Activated naive CD4-positive, alpha-beta T cell treated with anti-CD3 and anti-CD28 coated beads for 36 hours (primary cell): ENCODE measurements at regions of chr1 and their contacts with region 1.

Region 1: GRCh38 chr1:156480411-156481192 is 20.0 kb downstream of the MEF2D start:
- DNase-seq: peak; percentile 87
- H3K4me3 Mint-ChIP-seq: peak overlapping the region; percentile 5
- H3K27ac Mint-ChIP-seq: peak overlapping the region; percentile 81
- H3K4me1 Mint-ChIP-seq: peaks cover 54% of the 10 kb centered on the region
- H3K27me3 Mint-ChIP-seq: no peaks in the 10 kb centered on the region

Region 2: GRCh38 chr1:156510709-156511108 is 30.1 kb after region 1 on chr1:
- CTCF ChIA-PET with region 1: interaction called, 306 read pairs
- intact Hi-C with region 1: loop called (anchors 5 kb)
- DNase-seq: no peak
- H3K4me3 Mint-ChIP-seq: no peak overlapping the region
- H3K27ac Mint-ChIP-seq: no peak overlapping the region
- H3K4me1 Mint-ChIP-seq: peaks cover 36% of the 10 kb centered on the region
- H3K27me3 Mint-ChIP-seq: no peaks in the 10 kb centered on the region

Region 3: DNA sequence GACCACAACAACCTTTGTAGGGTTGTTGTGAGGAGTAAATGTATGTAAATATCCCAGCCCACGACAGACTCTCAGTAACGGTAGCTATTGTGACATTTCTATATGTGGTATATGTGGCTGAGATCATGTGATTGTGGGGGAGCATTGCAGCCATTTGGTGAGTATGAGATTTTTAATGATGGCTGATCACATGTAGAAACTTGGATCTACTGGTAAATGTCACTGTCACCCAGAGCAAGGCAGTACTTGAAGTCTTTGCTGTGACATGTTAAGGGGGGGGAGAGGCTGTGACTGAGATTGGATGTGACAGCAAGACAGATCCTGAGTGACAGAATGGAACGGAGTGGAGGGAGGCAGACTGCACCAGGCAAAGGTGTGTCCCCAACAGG is 43.9 kb after region 1 on chr1:
- CTCF ChIA-PET with region 1: interaction called, 11 read pairs
- intact Hi-C with region 1: loop called (anchors 1 kb)
- DNase-seq: peak; percentile 45
- H3K4me3 Mint-ChIP-seq: no peak overlapping the region
- H3K27ac Mint-ChIP-seq: no peak overlapping the region
- H3K4me1 Mint-ChIP-seq: peaks cover 34% of the 10 kb centered on the region
- H3K27me3 Mint-ChIP-seq: no peaks in the 10 kb centered on the region

Region 4: DNA sequence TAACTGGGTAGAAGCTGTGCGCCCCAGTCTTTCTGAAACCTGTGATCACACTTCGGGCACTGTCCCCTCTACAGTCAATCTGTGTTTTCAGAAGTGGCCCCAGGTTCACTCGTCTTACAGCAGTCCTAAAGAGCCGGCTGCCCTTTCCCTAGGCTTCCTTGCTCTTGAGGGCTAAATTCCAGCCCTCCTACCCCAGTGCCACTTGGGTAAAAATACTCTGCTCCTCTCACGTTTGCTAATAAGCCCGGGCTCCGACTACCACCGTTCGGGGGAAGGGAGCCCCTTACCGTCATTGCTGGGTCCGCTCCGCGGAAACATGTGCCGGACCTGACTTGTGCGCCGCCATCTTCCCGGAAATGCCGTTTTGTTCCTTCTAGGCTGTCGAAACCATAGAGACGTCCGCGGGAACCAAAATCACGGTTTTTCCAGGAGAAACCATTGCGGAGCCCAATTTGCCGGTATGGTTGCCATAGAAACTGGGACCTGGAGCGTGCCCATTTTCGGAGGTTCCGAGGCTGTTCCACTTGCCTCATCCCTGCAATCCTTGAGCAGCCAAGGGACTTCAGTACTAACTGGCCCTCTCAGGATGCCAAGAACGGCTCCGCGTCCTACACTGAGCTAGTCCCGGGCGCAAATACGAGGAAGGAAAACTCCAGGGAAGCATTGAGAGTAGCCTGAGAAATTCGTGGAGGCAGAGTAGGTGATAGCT is 120.7 kb after region 1 on chr1 and contains the start of gene GPATCH4:
- CTCF ChIA-PET with region 1: interaction called, 5 read pairs
- intact Hi-C with region 1: loop called (anchors 1 kb)
- DNase-seq: peak; percentile 89
- H3K4me3 Mint-ChIP-seq: peak within 1 kb of the TSS; percentile 91
- H3K27ac Mint-ChIP-seq: peak within 1 kb of the TSS; percentile 97
- H3K4me1 Mint-ChIP-seq: peaks cover 47% of the 10 kb centered on the region
- H3K27me3 Mint-ChIP-seq: no peaks in the 10 kb centered on the region
- total RNA-seq, gene GPATCH4: 37.5 to 38.3 TPM

Region 5: DNA sequence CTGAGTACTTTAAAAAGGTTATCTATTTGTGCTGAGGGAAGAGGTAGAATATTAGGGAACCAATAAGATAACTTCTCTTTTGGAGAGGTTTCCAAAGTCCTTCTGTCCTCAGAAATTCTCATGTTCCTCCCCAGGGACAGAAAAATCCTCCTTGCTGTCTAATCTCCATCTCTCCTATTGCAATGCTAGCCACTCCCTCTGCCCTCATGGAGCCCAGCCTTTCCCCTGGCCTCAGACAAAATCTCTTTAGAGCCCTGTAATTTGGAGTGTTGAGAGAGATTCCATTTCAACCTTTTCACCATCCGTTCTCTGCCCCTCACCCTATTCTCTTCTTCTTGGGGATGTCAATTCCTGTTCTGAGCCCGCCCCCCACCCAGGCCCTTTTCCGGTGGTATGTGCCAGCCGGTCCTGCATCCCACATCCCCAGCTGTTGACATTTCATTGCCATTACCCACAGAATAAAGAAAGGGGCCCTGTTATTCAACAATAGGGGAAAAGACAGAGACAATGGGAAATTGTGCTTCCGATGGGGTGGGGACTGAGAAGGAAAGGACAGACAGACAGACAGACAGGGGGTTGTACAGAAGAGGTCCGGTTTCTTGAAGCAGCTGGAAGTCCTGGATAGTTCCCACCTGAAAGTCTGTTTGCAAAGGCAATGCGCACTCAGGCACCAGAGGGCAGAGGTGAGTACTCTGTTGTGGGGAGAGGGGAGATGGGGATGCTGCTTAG is 138.4 kb after region 1 on chr1 and contains the start of gene HAPLN2:
- CTCF ChIA-PET with region 1: no interaction called
- intact Hi-C with region 1: no loop called
- DNase-seq: peak; percentile 45
- H3K4me3 Mint-ChIP-seq: no peak within 1 kb of the TSS
- H3K27ac Mint-ChIP-seq: no peak within 1 kb of the TSS
- H3K4me1 Mint-ChIP-seq: no peaks in the 10 kb centered on the region
- H3K27me3 Mint-ChIP-seq: peaks cover 40% of the 10 kb centered on the region
- total RNA-seq, gene HAPLN2: 0.40 to 0.55 TPM